Natural killer cell (primary cell): ENCODE measurements at regions of chr14 and their contacts with region 1.

Region 1: GRCh38 chr14:77457522-77458290 is at the starts of genes AHSA1 and VIPAS39:
- DNase-seq: peak; percentile 86 to 98
- ATAC-seq: peak; percentile 93 to 98 (median 93)
- H3K4me3 ChIP-seq: peak within 1 kb of the TSS; percentile 86
- H3K4me3 Mint-ChIP-seq: peak within 1 kb of the TSS; percentile 100
- H3K27ac ChIP-seq: peak within 1 kb of the TSS; percentile 87
- H3K27ac Mint-ChIP-seq: peak within 1 kb of the TSS; percentile 99 to 100
- H3K4me1 ChIP-seq: peaks cover 17% of the 10 kb centered on the region
- H3K4me1 Mint-ChIP-seq: peaks cover 44 to 50% of the 10 kb centered on the region in 2 donors
- H3K27me3 ChIP-seq: no peaks in the 10 kb centered on the region
- H3K27me3 Mint-ChIP-seq: no peaks in the 10 kb centered on the region
- CTCF ChIP-seq: no peak
- total RNA-seq, gene AHSA1: 70.4 to 101 (median 94.3) TPM
- total RNA-seq, gene VIPAS39: 11.2 to 14.4 (median 13.0) TPM

Region 2: DNA sequence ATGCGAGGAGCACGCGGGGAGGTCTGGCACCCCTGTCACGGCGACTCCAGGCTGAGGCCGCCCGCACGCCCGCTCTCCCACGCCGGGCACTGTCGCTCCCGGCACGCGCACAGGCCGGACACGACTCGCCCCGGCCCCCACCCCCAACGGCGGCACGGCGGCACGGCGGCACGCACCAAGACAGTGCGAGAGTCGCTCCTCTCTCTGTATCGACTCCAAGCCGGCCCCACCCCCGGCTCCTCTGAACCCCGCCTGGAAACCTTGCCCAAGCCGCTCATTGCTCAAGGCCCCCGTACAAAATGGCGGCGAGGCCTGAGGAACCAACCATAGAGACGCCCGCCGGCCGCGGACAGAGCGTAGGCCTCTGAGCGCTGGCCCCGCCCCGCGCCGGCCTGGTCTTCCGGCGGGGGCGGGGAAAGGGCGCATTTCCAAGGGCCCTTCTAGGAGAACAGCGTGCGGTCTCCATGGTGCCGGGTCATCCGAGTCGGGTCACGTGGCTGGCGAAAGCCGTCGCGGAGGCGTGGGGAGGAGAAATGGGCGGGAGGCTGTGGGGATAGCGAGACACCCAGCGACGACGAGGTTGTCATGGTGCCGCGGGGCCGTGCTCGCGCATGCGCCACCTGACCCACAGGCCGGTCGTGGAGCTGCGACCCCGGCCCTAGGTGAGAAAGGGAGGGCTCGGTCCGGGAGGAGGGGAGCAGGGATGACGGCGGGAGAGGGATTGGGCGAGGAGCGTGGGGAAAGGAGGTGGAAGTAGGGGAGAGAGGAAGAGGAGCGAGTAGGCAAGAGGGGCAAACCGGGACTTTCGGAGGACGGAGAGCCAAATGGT is 359.8 kb before region 1 on chr14 and contains the start of gene CIPC:
- intact Hi-C with region 1: loop called (anchors 5 kb)
- DNase-seq: peak; percentile 97 to 99
- ATAC-seq: peak; percentile 89 to 99 (median 93)
- H3K4me3 ChIP-seq: peak within 1 kb of the TSS; percentile 98
- H3K4me3 Mint-ChIP-seq: peak within 1 kb of the TSS; percentile 96
- H3K27ac ChIP-seq: peak within 1 kb of the TSS; percentile 98
- H3K27ac Mint-ChIP-seq: peak within 1 kb of the TSS; percentile 88 to 98
- H3K4me1 ChIP-seq: peaks cover 19% of the 10 kb centered on the region
- H3K4me1 Mint-ChIP-seq: peaks cover 40 to 46% of the 10 kb centered on the region in 2 donors
- H3K27me3 ChIP-seq: no peaks in the 10 kb centered on the region
- H3K27me3 Mint-ChIP-seq: no peaks in the 10 kb centered on the region
- CTCF ChIP-seq: no peak
- total RNA-seq, gene CIPC: 7.1 to 10.0 (median 9.9) TPM

Region 3: GRCh38 chr14:77228056-77228455 is 229.7 kb before region 1 on chr14:
- intact Hi-C with region 1: no loop called
- DNase-seq: no peak
- ATAC-seq: no peak
- H3K4me3 ChIP-seq: no peak overlapping the region
- H3K4me3 Mint-ChIP-seq: no peak overlapping the region
- H3K27ac ChIP-seq: no peak overlapping the region
- H3K27ac Mint-ChIP-seq: no peak overlapping the region
- H3K4me1 ChIP-seq: no peaks in the 10 kb centered on the region
- H3K4me1 Mint-ChIP-seq: no peaks in the 10 kb centered on the region
- H3K27me3 ChIP-seq: no peaks in the 10 kb centered on the region
- H3K27me3 Mint-ChIP-seq: no peaks in the 10 kb centered on the region
- CTCF ChIP-seq: no peak

Region 4: GRCh38 chr14:77259025-77259715 is 198.5 kb before region 1 on chr14:
- intact Hi-C with region 1: no loop called
- DNase-seq: no peak
- ATAC-seq: no peak
- H3K4me3 ChIP-seq: no peak overlapping the region
- H3K4me3 Mint-ChIP-seq: no peak overlapping the region
- H3K27ac ChIP-seq: no peak overlapping the region
- H3K27ac Mint-ChIP-seq: no peak overlapping the region
- H3K4me1 ChIP-seq: no peaks in the 10 kb centered on the region
- H3K4me1 Mint-ChIP-seq: no peaks in the 10 kb centered on the region
- H3K27me3 ChIP-seq: no peaks in the 10 kb centered on the region
- H3K27me3 Mint-ChIP-seq: peaks cover 12 to 21% of the 10 kb centered on the region in 2 donors
- CTCF ChIP-seq: no peak

Region 5: DNA sequence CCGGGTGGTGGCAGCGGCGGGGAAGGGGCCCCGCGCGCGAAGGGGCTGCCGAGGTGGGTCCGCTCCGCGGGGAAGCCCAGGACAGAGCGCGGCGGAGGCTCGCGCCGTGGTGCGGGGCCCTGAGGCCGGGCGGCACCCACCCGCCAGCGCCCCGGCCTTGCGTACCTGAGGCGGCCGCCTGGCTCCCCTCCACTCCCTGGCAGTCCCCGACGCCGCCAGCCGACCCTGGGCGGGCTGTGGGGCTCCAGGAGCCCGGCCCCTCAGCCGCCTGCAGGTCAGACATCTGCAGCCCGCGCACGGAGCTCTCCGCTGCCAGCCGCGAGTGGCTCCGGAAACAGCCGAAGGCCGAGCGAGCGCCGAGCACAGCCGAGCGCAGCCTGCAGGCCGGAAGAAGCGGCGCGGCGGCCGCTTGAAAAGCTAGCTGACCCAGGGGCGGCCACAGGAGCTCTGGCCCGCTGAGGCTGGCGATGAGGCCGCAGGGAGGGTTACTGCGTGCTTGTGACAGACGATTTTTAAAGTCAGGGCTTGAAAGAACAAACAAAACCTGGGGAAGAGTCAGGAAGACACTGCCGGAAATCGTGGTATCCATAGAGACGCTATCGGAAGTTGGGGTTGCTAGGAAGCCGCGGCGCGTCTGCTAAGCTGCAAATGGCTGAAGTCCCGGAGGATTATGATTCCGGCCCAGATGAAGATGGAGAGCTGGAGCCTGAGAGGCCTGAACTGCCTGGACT is 80.8 kb before region 1 on chr14 and contains the starts of genes SAMD15 and TMED8:
- intact Hi-C with region 1: loop called (anchors 2 kb)
- DNase-seq: peak; percentile 85 to 91
- ATAC-seq: peak; percentile 96 to 98 (median 97)
- H3K4me3 ChIP-seq: peak within 1 kb of the TSS; percentile 96
- H3K4me3 Mint-ChIP-seq: peak within 1 kb of the TSS; percentile 94
- H3K27ac ChIP-seq: peak within 1 kb of the TSS; percentile 74
- H3K27ac Mint-ChIP-seq: no peak within 1 kb of the TSS
- H3K4me1 ChIP-seq: peaks cover 13% of the 10 kb centered on the region
- H3K4me1 Mint-ChIP-seq: peaks cover 26 to 28% of the 10 kb centered on the region in 2 donors
- H3K27me3 ChIP-seq: no peaks in the 10 kb centered on the region
- H3K27me3 Mint-ChIP-seq: peaks cover 0 to 2% of the 10 kb centered on the region in 2 donors
- CTCF ChIP-seq: no peak
- total RNA-seq, gene SAMD15: 0.09 to 0.54 (median 0.40) TPM
- total RNA-seq, gene TMED8: 8.0 to 9.3 (median 9.1) TPM

Region 6: DNA sequence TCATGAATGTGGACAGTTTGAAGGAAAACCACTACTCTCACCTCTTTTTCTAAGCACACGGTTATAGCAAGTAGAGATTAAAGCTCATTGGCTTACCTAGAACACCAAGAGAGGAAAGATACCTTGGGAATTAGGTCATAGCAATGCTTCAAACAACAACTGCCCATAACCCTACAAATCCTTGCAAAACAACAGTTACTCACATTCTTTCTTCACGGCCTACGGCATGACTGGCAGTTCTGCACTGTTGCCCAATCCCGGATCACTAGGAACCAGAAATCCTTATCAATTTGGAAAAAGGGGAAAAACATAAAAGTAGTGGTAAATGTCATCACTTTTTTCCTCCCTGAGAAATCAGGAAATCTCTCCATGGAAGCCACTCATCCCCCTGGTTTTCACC is 50.5 kb after region 1 on chr14:
- intact Hi-C with region 1: no loop called
- DNase-seq: no peak
- ATAC-seq: no peak
- H3K4me3 ChIP-seq: no peak overlapping the region
- H3K4me3 Mint-ChIP-seq: no peak overlapping the region
- H3K27ac ChIP-seq: no peak overlapping the region
- H3K27ac Mint-ChIP-seq: no peak overlapping the region
- H3K4me1 ChIP-seq: no peaks in the 10 kb centered on the region
- H3K4me1 Mint-ChIP-seq: peaks cover 0 to 7% of the 10 kb centered on the region in 2 donors
- H3K27me3 ChIP-seq: no peaks in the 10 kb centered on the region
- H3K27me3 Mint-ChIP-seq: no peaks in the 10 kb centered on the region
- CTCF ChIP-seq: no peak

Region 7: GRCh38 chr14:77580964-77581505 is 123.3 kb after region 1 on chr14:
- intact Hi-C with region 1: no loop called
- DNase-seq: peak in 1 of 2 donors; percentile 66
- ATAC-seq: peak; percentile 79 to 82 (median 82)
- H3K4me3 ChIP-seq: no peak overlapping the region
- H3K4me3 Mint-ChIP-seq: peak overlapping the region; percentile 75
- H3K27ac ChIP-seq: peak overlapping the region; percentile 63
- H3K27ac Mint-ChIP-seq: peak overlapping the region; percentile 87 to 93
- H3K4me1 ChIP-seq: peaks cover 15% of the 10 kb centered on the region
- H3K4me1 Mint-ChIP-seq: peaks cover 26 to 27% of the 10 kb centered on the region in 2 donors
- H3K27me3 ChIP-seq: no peaks in the 10 kb centered on the region
- H3K27me3 Mint-ChIP-seq: no peaks in the 10 kb centered on the region
- CTCF ChIP-seq: no peak

Region 8: GRCh38 chr14:77616454-77617229 is 158.9 kb after region 1 on chr14 and contains the start of gene SPTLC2:
- intact Hi-C with region 1: loop called (anchors 1 kb)
- DNase-seq: peak; percentile 94 to 99
- ATAC-seq: peak; percentile 92 to 99 (median 94)
- H3K4me3 ChIP-seq: peak within 1 kb of the TSS; percentile 55
- H3K4me3 Mint-ChIP-seq: peak within 1 kb of the TSS; percentile 92
- H3K27ac ChIP-seq: peak within 1 kb of the TSS; percentile 55
- H3K27ac Mint-ChIP-seq: peak within 1 kb of the TSS; percentile 83 to 92
- H3K4me1 ChIP-seq: peaks cover 15% of the 10 kb centered on the region
- H3K4me1 Mint-ChIP-seq: peaks cover 32 to 48% of the 10 kb centered on the region in 2 donors
- H3K27me3 ChIP-seq: no peaks in the 10 kb centered on the region
- H3K27me3 Mint-ChIP-seq: no peaks in the 10 kb centered on the region
- CTCF ChIP-seq: no peak
- total RNA-seq, gene SPTLC2: 35.2 to 58.6 (median 50.4) TPM

Region 9: DNA sequence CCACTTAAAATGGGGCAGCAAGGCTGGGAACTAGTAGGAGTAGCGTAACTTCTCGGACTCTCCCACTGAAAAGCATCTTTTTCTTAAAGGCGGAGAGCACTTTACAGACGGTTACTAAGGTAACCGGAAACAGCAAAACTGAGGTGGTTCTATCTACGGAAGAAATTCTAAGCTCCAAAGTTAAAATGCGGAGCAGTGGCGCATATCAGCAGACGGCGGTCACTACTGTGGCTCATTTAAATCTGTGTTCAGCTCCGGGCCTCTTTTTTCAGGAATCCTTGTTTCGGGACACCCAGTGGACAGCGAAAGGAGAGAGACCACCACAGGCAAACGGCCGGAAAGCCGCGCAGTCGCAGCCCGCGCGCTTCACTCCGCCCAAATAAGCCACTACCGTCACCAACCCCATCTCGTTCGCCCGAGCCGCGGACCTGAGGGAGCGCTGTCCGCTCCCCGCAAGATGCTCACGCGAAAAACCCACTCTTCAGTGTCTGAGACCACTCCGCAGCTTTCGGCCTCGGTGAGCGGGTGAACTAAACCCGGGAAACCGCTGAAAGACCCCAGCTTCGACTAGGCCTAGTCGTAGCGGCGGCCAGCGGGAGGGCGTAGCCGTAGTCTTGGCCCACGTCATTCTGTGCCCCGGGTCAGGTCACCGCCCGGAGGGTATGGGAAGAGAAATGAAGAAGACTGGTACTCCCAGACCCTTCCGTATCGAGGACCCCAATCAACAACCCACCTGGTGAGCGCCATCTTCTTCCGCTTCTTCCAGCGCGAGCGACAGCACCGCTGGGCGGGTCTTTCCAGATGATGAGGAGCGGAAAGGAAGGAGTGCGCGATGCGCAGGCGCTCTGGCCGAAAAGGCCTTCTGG is 302.9 kb after region 1 on chr14 and contains the start of gene SNW1:
- intact Hi-C with region 1: loop called (anchors 1 kb)
- DNase-seq: peak; percentile 81 to 98
- ATAC-seq: peak; percentile 90 to 95 (median 92)
- H3K4me3 ChIP-seq: peak within 1 kb of the TSS; percentile 81
- H3K4me3 Mint-ChIP-seq: peak within 1 kb of the TSS; percentile 94
- H3K27ac ChIP-seq: peak within 1 kb of the TSS; percentile 96
- H3K27ac Mint-ChIP-seq: peak within 1 kb of the TSS; percentile 95 to 97
- H3K4me1 ChIP-seq: peaks cover 26% of the 10 kb centered on the region
- H3K4me1 Mint-ChIP-seq: peaks cover 32 to 41% of the 10 kb centered on the region in 2 donors
- H3K27me3 ChIP-seq: no peaks in the 10 kb centered on the region
- H3K27me3 Mint-ChIP-seq: no peaks in the 10 kb centered on the region
- CTCF ChIP-seq: no peak
- total RNA-seq, gene SNW1: 89.7 to 106 (median 103) TPM